Activated CD4-positive, alpha-beta memory T cell treated with anti-CD3 and anti-CD28 coated beads, Interleukin-2, amount 10 ng/mL, durations not matched to agents 7 days and 5 days (primary cell): ENCODE measurements at regions of chr7 and their contacts with region 1.

Region 1: DNA sequence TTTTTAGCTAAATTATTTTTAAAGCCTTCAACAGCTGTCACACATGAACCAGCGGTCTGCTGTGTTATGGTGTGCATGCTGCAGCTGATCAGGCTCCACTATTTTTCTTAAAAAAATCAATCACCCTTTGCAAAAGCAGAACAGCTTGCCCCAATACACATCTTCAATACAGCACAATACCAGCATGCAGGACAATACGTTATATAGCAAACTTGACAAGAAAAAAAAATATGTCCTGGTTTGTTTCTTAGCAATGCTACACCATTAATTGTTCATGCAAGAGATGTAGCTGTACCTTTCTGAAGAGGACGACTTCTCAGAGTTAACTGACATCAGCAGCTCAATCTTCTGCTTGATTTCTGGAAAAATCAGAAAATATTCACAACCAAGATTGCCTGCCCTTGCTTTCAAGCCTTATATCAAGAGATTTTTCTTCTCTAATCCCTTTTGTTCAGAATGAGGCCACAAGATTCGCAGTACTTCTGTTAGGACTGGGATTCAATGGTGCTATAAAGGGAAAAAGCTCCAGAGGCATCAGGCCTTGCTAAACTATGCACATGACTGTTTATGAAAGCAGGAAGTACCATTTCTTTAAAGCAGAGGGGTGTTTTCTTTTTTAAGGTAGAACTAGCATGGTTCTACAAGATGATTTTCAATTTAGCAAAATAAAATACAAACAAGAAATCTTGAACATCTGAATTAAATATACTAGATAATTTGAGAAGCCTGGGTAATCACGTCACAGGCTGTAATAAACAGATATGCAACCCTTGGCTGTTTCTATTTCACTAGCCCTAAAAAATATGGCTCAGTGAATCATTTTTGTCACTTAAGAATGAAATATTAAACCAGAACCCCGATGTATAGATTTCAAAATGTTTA is 120.0 kb downstream of the SRPK2 start:
- DNase-seq: no peak
- H3K4me3 Mint-ChIP-seq: peak overlapping the region; percentile 53
- H3K27ac Mint-ChIP-seq: peak overlapping the region; percentile 62
- H3K4me1 Mint-ChIP-seq: peaks cover 29% of the 10 kb centered on the region
- H3K27me3 Mint-ChIP-seq: no peaks in the 10 kb centered on the region

Region 2: GRCh38 chr7:105187302-105188169 is 81.2 kb before region 1 on chr7:
- CTCF ChIA-PET with region 1: no interaction called
- POLR2A ChIA-PET with region 1: no interaction called
- DNase-seq: no peak
- H3K4me3 Mint-ChIP-seq: no peak overlapping the region
- H3K27ac Mint-ChIP-seq: no peak overlapping the region
- H3K4me1 Mint-ChIP-seq: no peaks in the 10 kb centered on the region
- H3K27me3 Mint-ChIP-seq: no peaks in the 10 kb centered on the region

Region 3: DNA sequence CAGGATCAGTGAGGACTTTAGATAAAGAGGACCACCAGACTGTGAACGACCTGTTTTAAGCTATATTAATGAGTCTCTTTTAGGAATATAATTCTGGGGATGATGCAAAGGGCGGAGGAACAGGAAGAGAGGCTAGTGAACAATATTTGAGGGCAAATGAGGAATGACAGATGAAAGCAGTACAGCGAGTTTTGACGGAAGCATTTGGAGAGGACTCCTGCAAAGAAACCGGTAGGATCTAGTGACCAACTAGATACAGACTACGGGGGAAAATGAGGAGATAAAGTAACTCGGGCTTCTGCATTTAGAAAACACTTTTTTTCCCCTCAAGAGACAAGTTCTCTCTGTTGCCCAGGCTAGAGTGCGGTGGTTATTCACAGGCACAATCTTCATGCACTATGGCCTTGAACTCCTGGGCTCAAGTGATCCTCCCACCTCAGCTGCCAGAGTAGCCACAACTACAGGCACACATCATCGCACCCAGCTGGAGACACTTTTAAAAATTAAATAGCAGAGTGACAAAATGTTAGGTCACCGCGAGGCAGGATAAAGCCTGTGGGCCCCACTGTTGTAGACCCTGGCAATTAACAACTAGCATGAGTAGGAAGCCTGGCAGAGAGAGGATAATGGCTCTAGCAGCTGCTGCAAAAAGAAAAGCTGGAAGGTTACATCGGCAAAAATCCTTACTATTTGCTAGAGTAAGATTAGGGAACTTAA is 23.2 kb before region 1 on chr7:
- CTCF ChIA-PET with region 1: no interaction called
- POLR2A ChIA-PET with region 1: no interaction called
- DNase-seq: no peak
- H3K4me3 Mint-ChIP-seq: no peak overlapping the region
- H3K27ac Mint-ChIP-seq: no peak overlapping the region
- H3K4me1 Mint-ChIP-seq: no peaks in the 10 kb centered on the region
- H3K27me3 Mint-ChIP-seq: no peaks in the 10 kb centered on the region

Region 4: GRCh38 chr7:105298439-105298907 is 29.7 kb after region 1 on chr7:
- CTCF ChIA-PET with region 1: interaction called, 5 read pairs
- POLR2A ChIA-PET with region 1: interaction called, 31 read pairs
- DNase-seq: peak; percentile 51
- H3K4me3 Mint-ChIP-seq: peak overlapping the region; percentile 16
- H3K27ac Mint-ChIP-seq: peak overlapping the region; percentile 76
- H3K4me1 Mint-ChIP-seq: peaks cover 62% of the 10 kb centered on the region
- H3K27me3 Mint-ChIP-seq: no peaks in the 10 kb centered on the region